Left cardiac atrium (tissue), 4 donors: ENCODE measurements at regions of chr20 and their contacts with region 1.

Region 1: GRCh38 chr20:61886721-61887594 is 178.7 kb downstream of the TAF4 start:
- DNase-seq: peak; percentile 34
- ATAC-seq: peak; percentile 25 to 51

Region 2: DNA sequence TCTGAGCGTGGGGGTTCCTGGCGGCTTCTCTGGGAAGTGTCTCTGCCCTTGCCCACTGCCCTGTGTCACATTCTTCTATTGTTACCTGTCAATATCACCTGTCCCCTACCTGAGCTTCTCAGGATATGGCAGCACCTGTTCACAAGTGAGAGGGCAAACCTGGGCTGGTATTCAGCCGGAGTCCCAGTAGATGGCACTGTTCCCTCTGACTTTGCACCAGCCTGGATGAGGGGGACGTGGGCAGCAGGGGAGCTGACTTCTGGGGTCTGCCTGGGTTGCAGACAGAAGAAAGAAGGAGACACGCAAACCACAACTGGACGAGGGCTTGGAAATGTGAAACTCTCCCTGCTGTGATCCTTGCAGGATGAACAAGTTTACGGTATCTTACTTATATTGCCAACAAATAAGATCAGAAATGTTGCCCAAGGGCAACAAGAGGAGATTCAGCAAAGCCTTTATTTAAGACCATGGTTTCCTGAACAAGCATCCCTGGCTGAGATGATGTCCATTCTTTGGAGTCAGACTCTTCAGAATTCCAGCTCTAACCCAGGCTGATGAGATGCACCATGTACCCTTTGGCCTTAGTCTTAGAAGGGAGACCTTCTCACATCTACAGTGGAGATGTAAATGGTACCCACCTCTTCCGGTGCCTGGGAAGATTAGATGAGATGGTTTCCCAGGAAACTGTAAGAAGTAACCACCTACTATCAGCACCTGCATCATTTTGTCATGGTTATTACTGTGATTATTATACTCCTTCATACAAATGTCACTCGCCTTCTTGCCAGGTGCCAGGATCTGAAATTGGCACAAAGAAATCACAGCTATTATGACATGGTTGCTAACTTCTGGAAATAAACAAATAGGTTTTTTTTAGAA is 1034.9 kb before region 1 on chr20:
- intact Hi-C with region 1: loop called in 1 of 2 experiments (anchors 5 kb)
- DNase-seq: no peak
- ATAC-seq: no peak

Region 3: GRCh38 chr20:62097881-62098407 is 211.0 kb after region 1 on chr20:
- intact Hi-C with region 1: no loop called
- DNase-seq: no peak
- ATAC-seq: no peak